Left cardiac atrium (tissue), 4 donors: ENCODE measurements at regions of chr2 and their contacts with region 1.

Region 1: DNA sequence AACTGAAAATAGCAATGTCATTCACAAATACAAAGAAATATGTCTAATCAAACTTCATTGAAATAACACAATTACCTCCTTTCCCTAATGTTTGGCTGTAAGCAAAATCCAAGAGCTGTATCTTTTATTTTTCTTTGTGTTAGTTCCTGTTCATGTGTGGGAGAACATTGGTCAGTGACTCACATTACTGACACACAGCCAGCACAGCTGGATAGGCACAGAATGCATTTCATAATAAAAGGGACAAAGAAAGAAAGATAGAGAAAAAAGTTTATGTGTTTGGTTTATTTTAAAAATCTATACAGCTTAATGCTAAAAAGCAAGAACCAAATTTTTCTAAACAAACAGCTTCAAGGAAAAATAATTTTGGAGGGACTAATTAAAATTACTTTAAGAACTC is 185.6 kb upstream of the COL3A1 start:
- DNase-seq: peak; percentile 77
- ATAC-seq: peak; percentile 65 to 67

Region 2: GRCh38 chr2:188978291-188979081 is 189.9 kb after region 1 on chr2:
- intact Hi-C with region 1: loop called in 1 of 2 experiments (anchors 10 kb)
- DNase-seq: no peak
- ATAC-seq: peak; percentile 35 to 56

Region 3: DNA sequence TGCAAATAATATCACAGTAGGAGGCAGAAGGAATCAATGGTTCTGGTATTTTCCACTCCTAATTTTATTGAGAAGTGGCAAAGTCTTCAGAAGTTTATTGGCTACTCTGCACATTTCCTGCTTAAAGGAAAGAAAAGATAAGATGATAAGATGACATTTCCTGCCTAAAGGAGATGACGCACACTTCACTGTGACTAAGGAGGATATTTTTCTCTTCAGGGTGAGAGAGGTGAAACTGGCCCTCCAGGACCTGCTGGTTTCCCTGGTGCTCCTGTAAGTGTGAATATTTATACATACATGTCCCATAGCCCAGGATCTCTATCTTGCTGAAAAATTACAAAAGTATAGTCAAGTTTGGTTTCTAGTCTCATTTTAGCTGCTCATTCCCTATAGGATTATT is 213.5 kb after region 1 on chr2:
- intact Hi-C with region 1: no loop called
- DNase-seq: no peak
- ATAC-seq: peak in 1 of 2 donors; percentile 38